Ascending aorta (tissue), 2 donors: ENCODE measurements at regions of chr15 and their contacts with region 1.

Region 1: GRCh38 chr15:58331903-58332675 is 99.7 kb upstream of the LIPC start:
- DNase-seq: peak; percentile 91 to 98
- H3K4me3 ChIP-seq: peak overlapping the region in 1 of 2 donors; percentile 27
- H3K27ac ChIP-seq: peak overlapping the region; percentile 84 to 86
- H3K4me1 ChIP-seq: peaks cover 9 to 29% of the 10 kb centered on the region in 2 donors
- H3K27me3 ChIP-seq: no peaks in the 10 kb centered on the region
- CTCF ChIP-seq: no peak

Region 2: GRCh38 chr15:58227706-58228543 is 104.2 kb before region 1 on chr15:
- intact Hi-C with region 1: loop called (anchors 5 kb)
- DNase-seq: peak in 1 of 2 donors; percentile 83
- H3K4me3 ChIP-seq: no peak overlapping the region
- H3K27ac ChIP-seq: peak overlapping the region in 1 of 2 donors; percentile 38
- H3K4me1 ChIP-seq: peaks cover 0 to 12% of the 10 kb centered on the region in 2 donors
- H3K27me3 ChIP-seq: no peaks in the 10 kb centered on the region
- CTCF ChIP-seq: peak; percentile 67 to 80 (median 78)

Region 3: GRCh38 chr15:58247855-58248766 is 84.0 kb before region 1 on chr15:
- intact Hi-C with region 1: loop called (anchors 1 kb)
- DNase-seq: peak; percentile 79 to 91
- H3K4me3 ChIP-seq: no peak overlapping the region
- H3K27ac ChIP-seq: peak overlapping the region; percentile 49 to 61
- H3K4me1 ChIP-seq: peaks cover 3 to 6% of the 10 kb centered on the region in 2 donors
- H3K27me3 ChIP-seq: no peaks in the 10 kb centered on the region
- CTCF ChIP-seq: no peak

Region 4: DNA sequence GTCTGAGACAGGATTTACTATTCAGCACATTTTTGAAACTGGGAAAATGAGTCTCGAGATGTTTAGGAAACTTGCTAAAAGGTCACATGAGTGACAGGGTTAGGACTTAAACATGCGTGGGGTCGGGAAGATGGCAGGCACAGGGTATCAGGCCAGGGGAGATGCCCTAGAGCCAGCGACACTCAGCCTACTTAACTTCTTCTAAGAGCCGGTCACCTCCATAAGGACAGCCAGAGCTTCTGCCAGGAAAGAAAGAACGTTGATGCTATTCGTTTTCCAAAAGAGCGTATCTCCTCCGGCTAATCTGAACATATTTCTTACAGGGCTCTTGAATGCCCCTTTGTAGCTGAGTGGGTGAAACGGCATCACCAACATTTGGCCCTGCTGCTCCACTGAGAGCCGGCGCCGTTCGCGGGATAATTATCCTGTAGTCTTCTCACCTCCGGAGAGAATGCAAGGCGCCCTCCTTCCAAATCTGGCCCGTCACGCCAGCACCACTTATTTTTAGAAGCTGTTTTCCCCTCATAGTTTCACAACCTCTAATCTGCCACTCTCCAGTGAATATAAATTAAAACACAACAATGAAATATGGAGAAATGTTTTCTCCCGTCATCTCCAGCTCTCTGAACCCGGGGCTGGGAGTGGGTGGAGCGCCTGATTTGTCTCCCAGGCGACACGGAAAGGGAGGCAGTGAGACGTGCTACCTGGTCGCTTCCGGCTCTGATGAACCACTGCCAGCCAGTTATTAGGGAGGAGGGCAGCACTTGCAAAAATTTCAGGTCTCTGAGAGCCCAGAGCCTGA is 158.2 kb after region 1 on chr15:
- intact Hi-C with region 1: loop called (anchors 5 kb)
- DNase-seq: no peak
- H3K4me3 ChIP-seq: peak overlapping the region; percentile 12 to 22
- H3K27ac ChIP-seq: peak overlapping the region; percentile 84 to 90
- H3K4me1 ChIP-seq: peaks cover 3 to 19% of the 10 kb centered on the region in 2 donors
- H3K27me3 ChIP-seq: no peaks in the 10 kb centered on the region
- CTCF ChIP-seq: no peak

Region 5: DNA sequence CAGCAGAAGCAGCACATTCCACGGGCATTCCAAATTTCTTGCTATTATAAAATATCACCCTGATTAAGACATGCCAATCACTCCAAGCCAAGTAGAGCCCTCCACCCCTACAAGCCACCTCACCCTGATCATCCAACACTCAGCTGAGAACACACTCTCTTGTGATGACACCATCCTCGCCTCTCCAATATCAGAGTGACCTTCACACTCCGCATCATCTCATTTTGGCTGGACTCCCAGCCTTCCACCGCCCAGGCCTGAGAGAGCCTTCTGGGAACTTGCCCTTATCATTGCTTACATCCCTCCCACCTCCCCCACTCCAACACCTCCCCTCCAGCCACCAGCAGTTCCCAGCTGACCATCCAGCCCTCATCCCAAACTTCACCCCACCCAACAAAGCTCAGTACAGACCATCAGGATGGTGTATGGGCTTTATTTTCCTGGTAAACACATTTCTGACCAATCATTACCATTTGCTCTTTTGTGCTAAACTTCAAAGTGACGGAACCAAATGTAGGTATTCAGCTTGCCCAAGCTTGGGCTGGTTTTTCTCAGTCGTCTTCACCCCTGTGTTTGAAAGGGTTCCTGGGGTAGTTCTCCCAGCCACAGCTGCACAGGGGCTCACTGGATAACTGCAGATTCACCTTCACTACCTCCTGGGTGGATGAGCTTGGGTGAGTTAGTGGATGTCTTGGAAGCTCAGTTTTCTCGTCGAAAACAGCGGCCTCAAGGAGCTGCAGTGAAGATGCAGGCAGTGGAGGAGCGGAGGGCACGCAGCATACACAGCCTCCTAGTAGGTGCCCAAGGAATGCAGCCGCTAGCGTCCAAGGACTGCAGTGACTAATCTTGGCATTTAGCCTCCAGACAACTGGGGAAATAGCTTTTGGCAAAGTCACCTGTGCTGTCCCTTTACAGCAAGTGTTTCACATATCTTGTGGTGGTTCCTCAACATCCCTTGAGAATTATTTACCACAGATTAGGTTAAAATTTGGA is 214.8 kb after region 1 on chr15:
- intact Hi-C with region 1: loop called (anchors 5 kb)
- DNase-seq: peak in 1 of 2 donors; percentile 88
- H3K4me3 ChIP-seq: no peak overlapping the region
- H3K27ac ChIP-seq: peak overlapping the region; percentile 29 to 44
- H3K4me1 ChIP-seq: peaks cover 0 to 10% of the 10 kb centered on the region in 2 donors
- H3K27me3 ChIP-seq: no peaks in the 10 kb centered on the region
- CTCF ChIP-seq: no peak

Region 6: GRCh38 chr15:58770857-58771620 is 438.9 kb after region 1 on chr15 and contains the start of gene MINDY2:
- intact Hi-C with region 1: loop called (anchors 1 kb)
- DNase-seq: peak; percentile 93 to 99
- H3K4me3 ChIP-seq: peak within 1 kb of the TSS; percentile 70 to 96
- H3K27ac ChIP-seq: peak within 1 kb of the TSS; percentile 92 to 99
- H3K4me1 ChIP-seq: peaks cover 3 to 25% of the 10 kb centered on the region in 2 donors
- H3K27me3 ChIP-seq: no peaks in the 10 kb centered on the region
- CTCF ChIP-seq: peak in 2 of 3 experiments; percentile 29 to 31
- total RNA-seq, gene MINDY2: 10.4 TPM

Region 7: GRCh38 chr15:58933281-58934113 is 601.4 kb after region 1 on chr15 and contains the start of gene SLTM:
- intact Hi-C with region 1: loop called (anchors 5 kb)
- DNase-seq: peak; percentile 73 to 98
- H3K4me3 ChIP-seq: peak within 1 kb of the TSS; percentile 83 to 92
- H3K27ac ChIP-seq: peak within 1 kb of the TSS; percentile 98
- H3K4me1 ChIP-seq: peaks cover 0 to 13% of the 10 kb centered on the region in 2 donors
- H3K27me3 ChIP-seq: no peaks in the 10 kb centered on the region
- CTCF ChIP-seq: peak in 2 of 3 experiments; percentile 20 to 24
- total RNA-seq, gene SLTM: 109 TPM